ENCODE measurements at regions of chrX and their contacts with region 1.

Region 1: DNA sequence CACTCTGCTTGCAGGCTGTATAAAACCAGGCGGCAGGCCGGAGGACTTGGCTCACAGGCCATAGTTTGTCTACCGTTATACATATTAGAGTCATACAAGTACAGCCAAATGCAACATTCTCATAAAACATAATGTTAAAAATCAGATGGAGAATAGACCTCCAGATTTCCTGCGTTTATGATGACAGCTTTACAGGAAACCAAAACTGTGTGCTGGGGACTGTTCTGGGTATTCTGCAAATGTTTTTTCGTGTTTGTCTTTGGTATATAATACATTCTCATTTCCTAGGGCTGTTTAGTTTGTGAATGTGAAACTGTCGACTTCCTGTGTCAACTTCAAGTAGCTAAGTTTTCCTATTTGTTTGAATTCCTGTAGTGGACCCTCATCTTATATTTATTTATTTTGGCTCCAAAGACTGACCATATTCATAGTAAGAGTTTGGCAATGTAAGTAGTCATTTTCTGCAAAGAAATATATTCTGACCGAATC is 79.5 kb upstream of the FAM9C start:
- DNase-seq: no peak
- ATAC-seq: peak; percentile 89
- H3K4me3 ChIP-seq: no peak overlapping the region
- H3K27ac ChIP-seq: peak overlapping the region; percentile 79
- H3K4me1 ChIP-seq: no peaks in the 10 kb centered on the region
- H3K27me3 ChIP-seq: no peaks in the 10 kb centered on the region
- CTCF ChIP-seq: no peak

Region 2: GRCh38 chrX:13177921-13178566 is 54.1 kb after region 1 on chrX:
- CTCF ChIA-PET with region 1: interaction called, 10 read pairs
- POLR2A ChIA-PET with region 1: no interaction called
- in situ Hi-C with region 1: no loop called
- intact Hi-C with region 1: no loop called
- DNase-seq: no peak
- ATAC-seq: no peak
- H3K4me3 ChIP-seq: no peak overlapping the region
- H3K27ac ChIP-seq: peak overlapping the region; percentile 51; the same call in 1 of the 2 replicates
- H3K4me1 ChIP-seq: no peaks in the 10 kb centered on the region
- H3K27me3 ChIP-seq: no peaks in the 10 kb centered on the region
- CTCF ChIP-seq: no peak

Region 3: DNA sequence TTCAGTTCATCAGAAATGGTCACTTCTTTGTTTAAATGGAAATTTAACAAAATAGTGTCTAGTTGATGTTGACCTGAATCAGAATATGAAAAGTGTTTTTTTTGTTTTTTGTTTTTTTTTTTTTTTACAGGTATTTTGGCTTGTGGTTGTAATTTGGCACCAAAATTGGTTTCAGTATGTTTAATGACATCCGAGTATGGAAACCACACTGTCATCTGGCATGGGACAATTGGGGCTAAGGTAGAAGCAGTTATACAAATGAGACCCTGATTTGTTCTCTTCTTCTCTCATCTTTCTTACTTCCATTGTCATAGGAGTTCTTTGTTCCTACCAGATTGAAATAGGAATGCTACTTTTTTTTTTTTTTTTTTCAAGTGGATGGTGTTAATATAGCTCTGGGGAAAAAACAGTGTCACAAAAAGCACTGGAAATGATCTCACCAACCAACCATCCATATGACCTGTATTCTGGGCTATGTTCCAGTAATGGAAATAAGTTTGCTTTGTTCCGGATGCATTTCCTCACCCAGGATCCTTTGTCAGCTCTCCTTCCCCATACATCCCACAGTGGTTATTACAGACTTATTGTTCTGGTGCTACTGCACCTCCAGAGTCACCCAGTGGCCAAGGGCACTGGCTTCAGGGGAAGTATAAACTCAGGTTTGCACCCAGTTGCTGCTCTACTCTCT is 100.1 kb after region 1 on chrX:
- CTCF ChIA-PET with region 1: interaction called, 12 read pairs
- POLR2A ChIA-PET with region 1: no interaction called
- in situ Hi-C with region 1: no loop called
- intact Hi-C with region 1: loop called (anchors 10 kb)
- DNase-seq: peak; percentile 70
- ATAC-seq: peak; percentile 75
- H3K4me3 ChIP-seq: no peak overlapping the region
- H3K27ac ChIP-seq: peak overlapping the region; percentile 61
- H3K4me1 ChIP-seq: peaks cover 13% of the 10 kb centered on the region
- H3K27me3 ChIP-seq: no peaks in the 10 kb centered on the region
- CTCF ChIP-seq: no peak; the same call in 1 of the 2 replicates